ENCODE measurements at regions of chr12 and their contacts with region 1.

Region 1: GRCh38 chr12:55738123-55739024 is 4.5 kb upstream of the GDF11 start:
- DNase-seq: peak; percentile 80 to 93 (median 86)
- H3K4me3 ChIP-seq: peak overlapping the region in 3 of 4 donors; percentile 19 to 71 (median 51)
- H3K27ac ChIP-seq: peak overlapping the region; percentile 36 to 81 (median 72)
- H3K4me1 ChIP-seq: peaks cover 6 to 11% of the 10 kb centered on the region in 2 donors
- H3K27me3 ChIP-seq: no peaks in the 10 kb centered on the region
- CTCF ChIP-seq: peak; percentile 78 to 97 (median 95)
- POLR2A ChIP-seq: no peak

Region 2: GRCh38 chr12:54958048-54958658 is 780.2 kb before region 1 on chr12:
- intact Hi-C with region 1: no loop called
- DNase-seq: peak; percentile 26 to 61 (median 54)
- H3K4me3 ChIP-seq: no peak overlapping the region
- H3K27ac ChIP-seq: no peak overlapping the region
- H3K4me1 ChIP-seq: no peaks in the 10 kb centered on the region
- H3K27me3 ChIP-seq: peaks cover 6% of the 10 kb centered on the region
- CTCF ChIP-seq: peak; percentile 47 to 81 (median 74)
- POLR2A ChIP-seq: no peak

Region 3: GRCh38 chr12:55681142-55682077 is 57.0 kb before region 1 on chr12:
- intact Hi-C with region 1: no loop called
- DNase-seq: peak; percentile 45 to 68 (median 61)
- H3K4me3 ChIP-seq: peak overlapping the region in 1 of 4 donors; percentile 25
- H3K27ac ChIP-seq: peak overlapping the region in 1 of 5 donors; percentile 13
- H3K4me1 ChIP-seq: peaks cover 9 to 12% of the 10 kb centered on the region in 2 donors
- H3K27me3 ChIP-seq: no peaks in the 10 kb centered on the region
- CTCF ChIP-seq: peak in 5 of 6 experiments; percentile 21 to 45 (median 33)
- POLR2A ChIP-seq: no peak

Region 4: GRCh38 chr12:55797068-55797467 is 58.7 kb after region 1 on chr12:
- intact Hi-C with region 1: loop called (anchors 5 to 10 kb)
- DNase-seq: peak in 3 of 7 donors; percentile 35 to 42 (median 36)
- H3K4me3 ChIP-seq: no peak overlapping the region
- H3K27ac ChIP-seq: no peak overlapping the region
- H3K4me1 ChIP-seq: no peaks in the 10 kb centered on the region
- H3K27me3 ChIP-seq: no peaks in the 10 kb centered on the region
- CTCF ChIP-seq: peak in 5 of 6 experiments; percentile 31 to 57 (median 51)
- POLR2A ChIP-seq: no peak

Region 5: GRCh38 chr12:55806982-55807381 is 68.6 kb after region 1 on chr12:
- intact Hi-C with region 1: loop called in 1 of 2 experiments (anchors 10 kb)
- DNase-seq: no peak
- H3K4me3 ChIP-seq: no peak overlapping the region
- H3K27ac ChIP-seq: no peak overlapping the region
- H3K4me1 ChIP-seq: peaks cover 0 to 4% of the 10 kb centered on the region in 2 donors
- H3K27me3 ChIP-seq: no peaks in the 10 kb centered on the region
- CTCF ChIP-seq: no peak
- POLR2A ChIP-seq: no peak

Region 6: GRCh38 chr12:55817346-55818139 is 79.2 kb after region 1 on chr12 and contains the starts of genes ORMDL2 and SARNP:
- intact Hi-C with region 1: no loop called
- DNase-seq: peak; percentile 97 to 100 (median 99)
- H3K4me3 ChIP-seq: peak within 1 kb of the TSS; percentile 53 to 79 (median 61)
- H3K27ac ChIP-seq: peak within 1 kb of the TSS; percentile 74 to 92 (median 88)
- H3K4me1 ChIP-seq: peaks cover 18 to 39% of the 10 kb centered on the region in 2 donors
- H3K27me3 ChIP-seq: no peaks in the 10 kb centered on the region
- CTCF ChIP-seq: no peak
- POLR2A ChIP-seq: peak; percentile 68 to 91
- total RNA-seq, gene ORMDL2: 11.7 to 74.7 (median 26.3) TPM
- total RNA-seq, gene SARNP: 23.2 to 148 (median 56.0) TPM

Region 7: GRCh38 chr12:55940065-55940732 is 201.8 kb after region 1 on chr12:
- intact Hi-C with region 1: loop called (anchors 5 kb)
- DNase-seq: peak; percentile 87 to 96 (median 89)
- H3K4me3 ChIP-seq: no peak overlapping the region
- H3K27ac ChIP-seq: peak overlapping the region in 2 of 5 donors; percentile 45 to 46
- H3K4me1 ChIP-seq: peaks cover 0 to 12% of the 10 kb centered on the region in 2 donors
- H3K27me3 ChIP-seq: no peaks in the 10 kb centered on the region
- CTCF ChIP-seq: peak; percentile 79 to 90 (median 86)
- POLR2A ChIP-seq: no peak

Measured in adrenal gland (tissue), 19 donors.